GM12878 (cell line): ENCODE measurements at regions of chr6 and their contacts with region 1.

Region 1: GRCh38 chr6:137076277-137077068 is 31.7 kb upstream of the IL20RA start:
- DNase-seq: no peak
- ATAC-seq: peak; percentile 100
- H3K4me3 ChIP-seq: no peak overlapping the region
- H3K27ac ChIP-seq: peak overlapping the region; percentile 42
- H3K4me1 ChIP-seq: peaks cover 7% of the 10 kb centered on the region
- H3K27me3 ChIP-seq: no peaks in the 10 kb centered on the region
- CTCF ChIP-seq: peak; percentile 90 to 96 (median 93); a peak in 5 of 6 replicates
- EP300 ChIP-seq: no peak
- POLR2A ChIP-seq: no peak
- RAD21 ChIP-seq: peak; percentile 96

Region 2: GRCh38 chr6:136967876-136968752 is 108.4 kb before region 1 on chr6:
- CTCF ChIA-PET with region 1: interaction called, 3 read pairs
- POLR2A ChIA-PET with region 1: no interaction called
- RAD21 ChIA-PET with region 1: interaction called, 3 read pairs
- SMC1A ChIA-PET with region 1: interaction called, 4 read pairs
- in situ Hi-C with region 1: no loop called
- intact Hi-C with region 1: loop called (anchors 2 kb)
- DNase-seq: peak; percentile 35
- ATAC-seq: peak; percentile 99
- H3K4me3 ChIP-seq: no peak overlapping the region
- H3K27ac ChIP-seq: no peak overlapping the region
- H3K4me1 ChIP-seq: no peaks in the 10 kb centered on the region
- H3K27me3 ChIP-seq: no peaks in the 10 kb centered on the region
- CTCF ChIP-seq: peak; percentile 62 to 82 (median 71); a peak in 5 of 6 replicates
- EP300 ChIP-seq: no peak
- POLR2A ChIP-seq: no peak
- RAD21 ChIP-seq: peak; percentile 78

Region 3: DNA sequence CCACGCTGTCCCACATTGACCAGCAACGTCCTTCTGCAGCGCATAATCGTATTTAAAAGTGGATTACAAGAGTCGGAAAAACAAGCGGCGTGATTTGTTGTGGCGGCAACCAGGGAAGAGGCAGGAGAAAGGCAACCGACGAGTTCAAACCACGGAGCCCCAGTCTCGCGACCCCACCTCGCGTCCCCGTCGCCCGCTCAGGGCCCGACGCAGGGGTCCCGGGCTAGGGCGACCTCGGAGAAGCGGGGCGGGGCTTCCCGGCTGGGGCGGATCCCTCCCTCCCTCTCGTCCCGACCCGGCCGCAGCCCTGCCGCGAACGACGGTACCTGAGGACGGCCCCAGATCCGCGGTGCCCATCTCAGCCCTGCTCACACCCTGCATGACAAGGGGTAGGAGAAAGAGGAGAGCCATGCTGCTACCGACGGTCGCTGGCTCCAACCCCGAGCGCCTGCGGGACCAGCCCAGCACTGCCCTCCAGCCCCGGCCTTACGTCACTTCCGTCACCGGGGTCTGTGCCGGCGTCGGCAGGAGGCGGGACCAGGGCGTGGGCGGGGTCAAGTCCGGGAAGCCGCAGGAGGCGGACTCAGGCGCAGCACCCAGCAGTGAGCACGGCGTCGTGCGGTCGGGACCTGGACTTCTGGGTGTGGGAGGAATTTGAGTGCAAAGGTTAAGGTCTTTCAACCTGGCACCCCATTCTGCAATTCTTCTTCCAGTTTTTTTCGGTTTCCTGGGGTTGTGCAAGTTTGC is 142.6 kb after region 1 on chr6 and contains the start of gene IFNGR1:
- CTCF ChIA-PET with region 1: interaction called, 5 read pairs
- POLR2A ChIA-PET with region 1: no interaction called
- RAD21 ChIA-PET with region 1: interaction called, 5 read pairs
- SMC1A ChIA-PET with region 1: interaction called, 17 read pairs
- in situ Hi-C with region 1: no loop called
- intact Hi-C with region 1: no loop called
- DNase-seq: peak; percentile 81
- ATAC-seq: peak; percentile 79
- H3K4me3 ChIP-seq: peak within 1 kb of the TSS; percentile 91
- H3K27ac ChIP-seq: peak within 1 kb of the TSS; percentile 94
- H3K4me1 ChIP-seq: peaks cover 15% of the 10 kb centered on the region
- H3K27me3 ChIP-seq: no peaks in the 10 kb centered on the region
- CTCF ChIP-seq: no peak
- EP300 ChIP-seq: no peak
- POLR2A ChIP-seq: peak; percentile 94
- RAD21 ChIP-seq: no peak
- polyA plus RNA-seq, gene IFNGR1: 182 to 296 TPM

Region 4: DNA sequence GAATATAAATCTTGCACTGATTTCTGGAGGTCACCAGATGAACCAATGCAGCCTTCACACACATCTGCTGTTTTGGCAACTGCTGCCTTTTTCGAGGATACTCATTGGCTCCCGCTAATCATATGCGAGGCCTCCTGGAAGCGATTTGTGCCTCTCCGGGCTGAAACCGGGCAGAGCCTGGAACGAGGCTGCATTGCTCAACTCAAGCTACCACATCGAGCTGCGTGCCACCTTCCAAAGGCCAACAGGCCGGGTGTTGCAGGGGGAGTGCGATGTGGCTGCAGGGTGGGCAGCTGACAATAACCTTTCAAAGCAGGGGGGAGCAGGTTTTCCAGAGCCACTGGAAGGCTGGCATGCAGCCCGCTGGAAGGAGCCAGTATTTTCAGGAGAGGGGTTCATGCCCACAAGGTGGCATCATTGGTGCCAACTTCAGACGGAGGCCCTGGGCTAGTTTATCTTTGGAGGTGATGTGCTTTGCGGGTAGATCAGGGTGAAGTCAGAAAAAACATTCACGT is 265.3 kb after region 1 on chr6:
- CTCF ChIA-PET with region 1: interaction called, 11 read pairs
- POLR2A ChIA-PET with region 1: interaction called, 3 read pairs
- RAD21 ChIA-PET with region 1: interaction called, 5 read pairs
- SMC1A ChIA-PET with region 1: interaction called, 13 read pairs
- in situ Hi-C with region 1: no loop called
- intact Hi-C with region 1: no loop called
- DNase-seq: no peak
- ATAC-seq: peak; percentile 70
- H3K4me3 ChIP-seq: no peak overlapping the region
- H3K27ac ChIP-seq: no peak overlapping the region
- H3K4me1 ChIP-seq: no peaks in the 10 kb centered on the region; the same call in 1 of the 2 replicates
- H3K27me3 ChIP-seq: no peaks in the 10 kb centered on the region; a peak in 2 of 4 replicates
- CTCF ChIP-seq: peak; percentile 32 to 49 (median 40); a peak in 3 of 6 replicates
- EP300 ChIP-seq: no peak
- POLR2A ChIP-seq: no peak
- RAD21 ChIP-seq: peak; percentile 57

Region 5: DNA sequence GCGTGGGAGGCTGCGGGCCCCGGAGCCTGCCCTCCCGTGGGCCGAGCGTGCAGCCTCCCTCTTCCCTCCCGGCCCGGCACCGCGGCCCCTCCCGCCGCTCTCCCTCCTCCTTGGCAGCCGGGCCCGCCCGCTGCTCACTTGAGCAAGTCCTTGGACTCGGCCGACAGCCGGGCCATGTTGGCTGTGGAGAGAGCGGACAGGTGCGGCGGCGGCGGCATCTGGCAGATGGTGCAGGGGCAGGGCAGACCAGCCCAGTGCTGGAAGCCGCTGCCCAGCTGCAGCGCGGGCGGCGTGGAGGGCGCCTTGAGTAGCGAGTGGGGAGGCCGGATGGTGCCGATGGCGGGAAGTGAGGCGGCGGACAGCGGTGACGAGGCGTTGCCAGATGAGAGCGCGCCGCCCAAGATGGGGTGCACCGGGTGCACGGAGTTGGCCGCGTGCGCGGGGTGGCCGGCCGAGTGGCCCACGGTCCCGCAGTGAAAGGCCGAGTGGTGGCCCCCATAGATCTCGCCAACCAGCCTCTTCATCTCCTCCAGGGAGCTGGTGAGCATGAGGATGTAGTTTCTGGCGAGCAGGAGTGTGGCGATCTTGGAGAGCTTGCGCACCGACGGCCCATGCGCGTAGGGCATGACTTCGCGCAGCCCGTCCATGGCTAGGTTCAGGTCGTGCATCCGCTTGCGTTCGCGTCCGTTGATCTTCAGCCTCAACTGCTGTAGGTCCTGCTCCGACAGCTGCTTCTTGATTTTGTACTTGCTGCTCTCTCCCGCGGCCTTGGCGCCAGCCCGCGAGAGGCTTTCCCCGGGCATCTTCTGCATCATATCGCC is 417.0 kb after region 1 on chr6:
- CTCF ChIA-PET with region 1: no interaction called
- POLR2A ChIA-PET with region 1: no interaction called
- RAD21 ChIA-PET with region 1: no interaction called
- SMC1A ChIA-PET with region 1: no interaction called
- in situ Hi-C with region 1: no loop called
- intact Hi-C with region 1: loop called (anchors 5 kb)
- DNase-seq: no peak
- ATAC-seq: no peak
- H3K4me3 ChIP-seq: no peak overlapping the region
- H3K27ac ChIP-seq: no peak overlapping the region
- H3K4me1 ChIP-seq: no peaks in the 10 kb centered on the region
- H3K27me3 ChIP-seq: peaks cover 44 to 64% of the 10 kb centered on the region in 2 experiments
- CTCF ChIP-seq: no peak
- EP300 ChIP-seq: no peak
- POLR2A ChIP-seq: no peak
- RAD21 ChIP-seq: no peak

Region 6: DNA sequence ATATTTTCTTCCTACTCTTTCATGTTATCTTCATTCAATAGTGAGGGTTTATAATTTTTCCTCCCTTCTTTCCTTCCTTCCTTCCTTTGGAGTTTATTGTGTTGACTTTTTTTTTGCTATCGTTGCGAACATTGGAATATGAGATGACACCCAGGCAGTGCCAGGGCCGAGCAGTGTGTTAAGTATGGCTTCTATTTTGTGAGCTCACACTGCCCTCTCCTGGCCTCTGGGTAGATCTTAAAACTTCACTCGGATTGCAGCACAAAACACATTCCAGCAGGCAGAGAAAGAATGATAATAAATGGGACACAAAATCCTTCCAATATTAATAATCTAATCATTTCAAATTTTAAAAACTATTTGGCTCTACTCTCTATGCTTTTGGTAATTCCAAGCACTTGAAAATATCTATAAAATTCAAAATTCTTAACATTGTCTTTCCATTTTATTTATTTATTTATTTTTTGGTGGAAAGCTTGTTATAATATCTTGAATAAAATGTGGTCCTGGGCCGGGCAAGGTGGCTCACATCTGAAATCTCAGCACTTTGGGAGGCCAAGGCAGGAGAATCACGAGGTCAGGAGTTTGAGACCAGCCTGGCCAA is 565.1 kb after region 1 on chr6:
- CTCF ChIA-PET with region 1: interaction called, 13 read pairs
- POLR2A ChIA-PET with region 1: no interaction called
- RAD21 ChIA-PET with region 1: interaction called, 15 read pairs
- SMC1A ChIA-PET with region 1: interaction called, 8 read pairs
- in situ Hi-C with region 1: no loop called
- intact Hi-C with region 1: loop called (anchors 1 kb)
- DNase-seq: no peak
- ATAC-seq: peak; percentile 79
- H3K4me3 ChIP-seq: no peak overlapping the region
- H3K27ac ChIP-seq: no peak overlapping the region
- H3K4me1 ChIP-seq: peaks cover 21% of the 10 kb centered on the region
- H3K27me3 ChIP-seq: no peaks in the 10 kb centered on the region
- CTCF ChIP-seq: peak; percentile 53 to 83 (median 65)
- EP300 ChIP-seq: no peak
- POLR2A ChIP-seq: no peak
- RAD21 ChIP-seq: peak; percentile 91